ENCODE measurements at regions of chr3 and their contacts with region 1.

Region 1: GRCh38 chr3:45705839-45706808 is 16.9 kb downstream of the SACM1L start:
- DNase-seq: no peak
- H3K4me3 ChIP-seq: no peak overlapping the region
- H3K27ac ChIP-seq: no peak overlapping the region
- H3K4me1 ChIP-seq: peaks cover 0 to 10% (median 3%) of the 10 kb centered on the region in 4 experiments
- H3K27me3 ChIP-seq: no peaks in the 10 kb centered on the region

Region 2: DNA sequence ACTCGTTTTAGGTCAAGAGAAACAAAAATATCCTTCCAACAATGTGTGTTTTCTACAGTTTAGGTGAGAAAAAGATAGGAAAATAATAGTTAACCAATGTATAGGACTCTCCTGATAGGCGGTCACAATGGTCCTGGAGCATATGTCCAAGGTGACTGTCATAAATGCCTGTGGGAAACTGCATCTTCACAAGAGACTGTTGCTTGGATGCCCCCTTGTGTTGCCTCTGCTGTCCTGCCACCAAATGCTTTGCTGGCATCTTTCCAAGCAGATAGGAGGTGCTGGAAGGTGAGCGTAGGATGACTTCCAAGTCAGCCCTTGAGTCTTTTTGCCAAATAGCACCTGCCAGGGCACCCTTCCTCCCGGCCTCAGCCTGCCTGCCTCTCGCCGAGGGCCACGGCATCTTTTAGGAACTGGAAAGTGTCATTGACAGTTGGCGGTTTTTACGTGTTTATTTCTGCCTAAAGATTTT is 41.0 kb before region 1 on chr3:
- CTCF ChIA-PET with region 1: interaction called, 14 read pairs
- POLR2A ChIA-PET with region 1: no interaction called
- DNase-seq: peak; percentile 84 to 86 (median 86)
- H3K4me3 ChIP-seq: peak overlapping the region in 6 of 7 experiments; percentile 60 to 81 (median 71)
- H3K27ac ChIP-seq: peak overlapping the region in 1 of 2 experiments; percentile 78
- H3K4me1 ChIP-seq: peaks cover 7 to 30% (median 21%) of the 10 kb centered on the region in 4 experiments
- H3K27me3 ChIP-seq: no peaks in the 10 kb centered on the region

Region 3: DNA sequence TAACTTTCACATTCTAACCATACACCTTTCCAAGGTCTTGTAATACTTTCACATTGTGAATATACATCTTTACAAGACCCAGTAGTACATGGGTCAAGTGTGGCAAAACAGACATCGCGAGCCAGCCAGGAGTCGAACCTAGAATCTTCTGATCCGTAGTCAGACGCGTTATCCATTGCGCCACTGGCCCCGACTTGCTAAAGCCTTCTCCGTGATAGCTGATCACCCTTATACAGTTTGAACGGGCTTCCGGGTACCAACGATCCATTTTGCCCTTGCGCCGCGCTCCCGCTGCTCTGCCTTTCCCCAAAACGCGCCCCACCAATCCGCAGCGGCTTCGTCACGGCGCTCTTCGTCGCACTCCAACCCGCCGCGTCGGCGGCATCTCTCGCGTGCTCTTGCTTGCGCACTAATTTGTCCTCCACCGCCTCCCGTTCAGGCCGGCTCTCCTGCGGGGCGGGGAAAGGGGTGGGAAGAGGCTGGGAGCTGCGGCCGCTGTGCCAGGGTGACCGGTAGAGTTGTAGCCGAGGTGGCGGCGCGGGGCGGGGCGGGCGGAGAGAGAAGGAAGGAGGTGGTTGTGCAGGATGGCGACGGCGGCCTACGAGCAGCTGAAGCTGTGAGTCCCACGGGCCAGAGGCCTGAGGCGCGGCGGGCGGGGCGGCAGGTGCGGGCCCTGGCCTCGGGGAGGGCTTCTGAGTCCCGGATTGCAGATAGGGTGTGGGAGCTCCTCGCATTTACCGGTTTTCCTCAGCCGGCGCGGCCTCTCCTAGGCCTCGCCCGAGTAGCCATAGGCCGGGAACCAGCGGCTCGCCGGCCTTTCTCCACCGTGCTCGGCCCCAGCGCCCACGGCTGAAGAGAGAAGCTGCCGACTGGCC is 17.0 kb before region 1 on chr3 and contains the start of gene SACM1L:
- CTCF ChIA-PET with region 1: interaction called, 28 read pairs
- POLR2A ChIA-PET with region 1: interaction called, 10 read pairs
- DNase-seq: peak; percentile 99 to 100 (median 99)
- H3K4me3 ChIP-seq: peak within 1 kb of the TSS; percentile 85 to 96 (median 91)
- H3K27ac ChIP-seq: peak within 1 kb of the TSS; percentile 85 to 96
- H3K4me1 ChIP-seq: peaks cover 33 to 48% (median 43%) of the 10 kb centered on the region in 4 experiments
- H3K27me3 ChIP-seq: no peaks in the 10 kb centered on the region